Activated naive CD4-positive, alpha-beta T cell treated with anti-CD3 and anti-CD28 coated beads, Interleukin-2, amount 10 ng/mL, durations not matched to agents 7 days and 5 days (primary cell): ENCODE measurements at regions of chr1 and their contacts with region 1.

Region 1: DNA sequence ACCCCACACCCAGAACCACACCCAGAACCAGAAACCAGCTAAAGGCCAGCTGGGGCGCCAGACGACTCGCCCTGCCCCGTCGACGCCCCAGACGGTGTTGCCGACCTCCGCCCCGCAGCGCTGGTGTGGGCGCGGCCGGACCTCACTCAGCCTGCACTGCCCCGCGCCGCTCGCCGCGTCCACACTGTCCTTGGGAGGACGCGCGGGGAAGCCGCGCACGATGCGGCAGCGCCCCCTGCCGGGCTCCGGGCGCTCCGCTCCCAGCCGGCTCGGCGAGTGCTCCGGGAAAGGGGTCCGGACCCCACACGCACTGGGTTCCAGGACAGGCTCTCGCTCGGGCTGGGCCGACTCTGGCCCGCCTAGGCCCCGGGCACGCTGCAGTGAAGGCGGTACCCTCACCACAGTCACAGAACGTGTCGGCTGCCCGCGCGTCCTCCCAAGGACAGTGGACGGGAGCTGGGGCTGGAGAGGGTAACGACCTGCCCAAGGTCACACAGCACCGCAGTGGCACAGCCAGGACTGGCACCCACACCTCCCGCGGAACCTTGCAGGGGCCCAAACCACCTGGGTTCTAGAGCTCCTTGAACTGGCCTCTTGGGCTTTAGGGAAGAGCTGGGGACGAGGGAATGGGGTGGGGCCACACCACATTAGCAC is 90.2 kb downstream of the DMRTA2 start:
- DNase-seq: peak; percentile 53
- H3K4me3 Mint-ChIP-seq: no peak overlapping the region
- H3K27ac Mint-ChIP-seq: no peak overlapping the region
- H3K4me1 Mint-ChIP-seq: peaks cover 8% of the 10 kb centered on the region
- H3K27me3 Mint-ChIP-seq: peaks cover 52% of the 10 kb centered on the region

Region 2: DNA sequence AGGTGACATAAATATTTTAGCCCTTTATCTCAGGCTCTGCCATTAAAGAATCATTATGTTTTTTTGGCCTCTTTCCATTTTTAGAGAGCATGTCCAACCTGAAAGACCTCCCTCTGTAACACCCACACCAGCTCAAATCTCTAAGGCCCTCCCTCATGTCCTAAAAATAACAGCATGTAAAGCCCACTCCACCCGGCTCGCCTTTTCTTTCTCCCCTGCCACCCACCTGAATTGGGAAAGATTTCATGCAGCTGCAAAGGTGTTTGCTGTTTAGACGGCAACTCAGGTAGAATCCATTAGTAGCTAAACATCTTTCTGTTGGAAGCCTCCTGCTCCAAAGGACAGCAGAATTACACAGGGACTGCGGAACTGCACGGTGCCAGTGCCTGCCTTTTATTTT is 10.3 kb after region 1 on chr1:
- CTCF ChIA-PET with region 1: interaction called, 14 read pairs
- DNase-seq: no peak
- H3K4me3 Mint-ChIP-seq: no peak overlapping the region
- H3K27ac Mint-ChIP-seq: no peak overlapping the region
- H3K4me1 Mint-ChIP-seq: no peaks in the 10 kb centered on the region
- H3K27me3 Mint-ChIP-seq: peaks cover 8% of the 10 kb centered on the region